ENCODE measurements at regions of chr15 and their contacts with region 1.

Region 1: GRCh38 chr15:45118131-45118588 is 4.0 kb downstream of the DUOXA2 start:
- DNase-seq: peak; percentile 97
- H3K4me3 ChIP-seq: peak overlapping the region in 1 of 2 experiments; percentile 53; a peak in 1 of 4 replicates
- H3K27ac ChIP-seq: no peak overlapping the region
- H3K4me1 ChIP-seq: peaks cover 6 to 17% of the 10 kb centered on the region in 2 experiments; a peak in 3 of 4 replicates
- H3K27me3 ChIP-seq: peaks cover 25% of the 10 kb centered on the region
- CTCF ChIP-seq: peak; percentile 98
- EP300 ChIP-seq: no peak
- RAD21 ChIP-seq: peak; percentile 83

Region 2: DNA sequence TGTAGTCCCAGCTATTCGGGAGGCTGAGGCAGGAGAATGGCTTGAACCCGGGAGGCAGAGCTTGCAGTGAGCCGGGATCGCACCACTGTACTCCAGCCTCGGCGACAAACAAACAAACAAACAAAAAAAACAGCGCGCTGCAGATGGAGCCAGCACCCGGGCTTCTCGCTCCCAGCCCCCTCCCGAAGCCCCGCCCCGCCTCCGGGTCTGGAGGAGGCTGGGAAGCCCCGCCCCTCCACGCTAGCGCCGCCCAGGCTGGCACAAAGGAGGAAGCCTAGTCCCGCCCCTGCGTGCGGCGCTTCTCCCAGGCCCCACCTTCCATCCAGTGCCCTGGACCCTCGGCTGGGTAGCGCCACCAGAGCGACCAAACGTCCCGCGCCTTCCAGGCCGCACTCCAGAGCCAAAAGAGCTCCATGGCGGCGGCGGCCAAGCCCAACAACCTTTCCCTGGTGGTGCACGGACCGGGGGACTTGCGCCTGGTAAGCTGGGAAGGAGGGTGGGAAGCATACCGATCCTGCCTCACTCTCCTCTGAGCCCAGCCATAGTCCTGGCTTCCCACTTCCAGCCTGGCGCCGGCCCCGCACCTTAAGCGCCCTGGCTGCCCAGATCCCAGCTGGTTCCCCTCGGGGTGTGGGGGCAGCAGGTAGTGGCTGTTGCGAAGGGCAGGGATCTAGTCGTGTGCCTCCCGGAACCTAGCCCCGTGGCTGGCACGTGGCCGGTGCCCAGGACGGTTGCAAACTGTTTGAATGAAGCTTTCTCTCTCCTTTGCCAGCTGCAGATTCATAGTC is 95.1 kb before region 1 on chr15 and contains the start of gene SORD:
- CTCF ChIA-PET with region 1: interaction called, 13 read pairs
- POLR2A ChIA-PET with region 1: interaction called, 3 read pairs
- DNase-seq: peak; percentile 99
- H3K4me3 ChIP-seq: peak within 1 kb of the TSS; percentile 74 to 80
- H3K27ac ChIP-seq: peak within 1 kb of the TSS; percentile 31 to 72; a peak in 3 of 4 replicates
- H3K4me1 ChIP-seq: peaks cover 0 to 27% of the 10 kb centered on the region in 2 experiments; a peak in 3 of 4 replicates
- H3K27me3 ChIP-seq: peaks cover 11% of the 10 kb centered on the region; the same call in 1 of the 2 replicates
- CTCF ChIP-seq: no peak
- EP300 ChIP-seq: 0 out of 4 replicates have a peak, but pooled peaks of 1 of the 2 experiments have one; percentile 21
- RAD21 ChIP-seq: no peak
- polyA plus RNA-seq, gene SORD: 35.1 and 40.8 TPM in 2 replicates

Region 3: DNA sequence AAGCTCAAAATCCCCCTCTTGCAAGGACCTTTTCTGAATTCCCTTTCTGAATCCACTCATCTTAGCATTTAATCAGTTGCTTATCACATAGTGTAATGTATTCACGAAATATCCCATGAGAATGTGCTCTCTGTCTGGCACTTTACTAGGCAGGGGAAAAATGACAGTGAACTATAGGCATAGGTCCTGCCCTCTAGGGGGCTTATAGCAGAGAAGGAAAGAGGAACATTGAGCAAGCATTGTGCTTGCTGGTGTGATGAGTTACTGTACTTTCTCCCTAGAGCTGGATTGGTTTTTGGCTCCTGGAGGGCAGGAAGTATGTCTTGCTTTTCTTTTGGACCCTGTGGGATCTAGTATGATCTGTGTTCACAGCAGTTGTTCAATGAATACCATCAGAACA is 30.6 kb before region 1 on chr15:
- CTCF ChIA-PET with region 1: interaction called, 46 read pairs
- POLR2A ChIA-PET with region 1: no interaction called
- DNase-seq: no peak
- H3K4me3 ChIP-seq: no peak overlapping the region
- H3K27ac ChIP-seq: no peak overlapping the region
- H3K4me1 ChIP-seq: no peaks in the 10 kb centered on the region
- H3K27me3 ChIP-seq: 0 out of 2 replicates have a peak, but pooled peaks cover 8% of the 10 kb centered on the region
- CTCF ChIP-seq: peak; percentile 10; the same call in 1 of the 2 replicates
- EP300 ChIP-seq: no peak
- RAD21 ChIP-seq: no peak

Region 4: DNA sequence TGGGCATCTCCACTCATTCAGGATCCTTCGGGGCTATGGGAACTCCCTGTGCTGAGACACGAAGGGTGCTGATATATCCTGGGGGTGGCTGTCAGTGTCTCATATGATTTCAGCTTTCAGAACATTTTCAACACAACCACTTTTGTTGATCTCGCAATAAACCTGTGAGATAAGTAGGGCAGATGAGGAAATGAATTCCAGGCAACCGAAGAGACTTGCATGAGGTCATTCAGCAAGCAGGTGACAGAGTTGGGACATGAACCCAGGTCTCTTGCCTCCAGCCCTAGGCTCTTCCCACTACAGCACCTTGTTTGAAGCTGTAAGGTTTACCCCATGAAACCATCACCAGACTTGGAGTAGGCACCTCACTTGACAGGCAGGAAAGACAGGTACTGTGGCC is 28.2 kb after region 1 on chr15:
- CTCF ChIA-PET with region 1: interaction called, 25 read pairs
- POLR2A ChIA-PET with region 1: interaction called, 3 read pairs
- DNase-seq: no peak
- H3K4me3 ChIP-seq: no peak overlapping the region
- H3K27ac ChIP-seq: no peak overlapping the region
- H3K4me1 ChIP-seq: peaks cover 12 to 13% of the 10 kb centered on the region in 2 experiments; a peak in 3 of 4 replicates
- H3K27me3 ChIP-seq: no peaks in the 10 kb centered on the region
- CTCF ChIP-seq: no peak
- EP300 ChIP-seq: no peak
- RAD21 ChIP-seq: no peak

Region 5: DNA sequence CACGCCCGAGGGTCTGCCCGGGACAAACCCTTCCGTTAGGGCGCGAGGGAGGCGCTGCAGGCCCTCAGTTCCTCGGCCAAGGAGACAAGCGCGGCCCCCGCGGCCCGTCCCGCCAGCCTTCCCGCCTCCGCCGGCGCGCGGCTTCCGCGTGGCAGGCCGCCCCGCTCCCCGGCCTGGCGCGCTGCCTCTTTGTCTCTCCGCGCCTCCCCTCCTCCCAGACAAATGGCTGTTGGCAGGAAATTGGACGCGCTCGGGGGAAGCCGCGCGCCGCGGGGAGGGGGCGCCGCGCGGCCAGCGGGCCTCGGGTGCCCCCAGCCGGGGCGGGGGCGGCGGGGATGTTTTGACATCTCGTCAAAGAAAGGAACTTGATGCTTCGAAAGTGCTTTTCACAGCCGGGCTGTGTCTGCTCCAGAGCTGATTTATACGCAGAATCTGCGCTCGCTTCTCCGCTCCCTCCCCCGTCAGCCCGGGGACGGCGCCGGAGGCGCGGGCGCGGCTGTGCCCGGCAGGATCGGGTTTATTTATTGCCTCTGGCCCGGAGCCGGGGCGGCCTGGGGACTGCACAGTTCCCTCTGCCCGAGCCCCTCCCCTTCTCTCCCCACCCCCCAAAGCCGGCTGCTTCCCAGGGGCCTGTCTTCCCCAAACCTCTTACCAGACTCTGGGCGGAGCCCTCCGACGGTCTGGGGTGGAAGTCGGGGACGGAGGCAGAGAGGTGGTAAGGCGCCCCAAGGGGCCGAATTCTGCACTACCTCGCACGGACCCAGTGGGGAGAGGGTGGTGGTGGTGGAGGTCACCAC is 48.9 kb after region 1 on chr15:
- CTCF ChIA-PET with region 1: interaction called, 26 read pairs
- POLR2A ChIA-PET with region 1: no interaction called
- DNase-seq: peak; percentile 83
- H3K4me3 ChIP-seq: peak overlapping the region; percentile 54 to 72
- H3K27ac ChIP-seq: peak overlapping the region; percentile 84 to 100
- H3K4me1 ChIP-seq: peaks cover 16 to 65% of the 10 kb centered on the region in 2 experiments
- H3K27me3 ChIP-seq: no peaks in the 10 kb centered on the region
- CTCF ChIP-seq: peak; percentile 62
- EP300 ChIP-seq: 0 out of 4 replicates have a peak, but pooled peaks have one; percentile 2 to 22
- RAD21 ChIP-seq: peak; percentile 17; the same call in 1 of the 2 replicates